MCF 10A (cell line): ENCODE measurements at regions of chr13 and their contacts with region 1.

Region 1: GRCh38 chr13:30132623-30133553 is 174.5 kb downstream of the KATNAL1 start:
- DNase-seq: peak; percentile 91
- H3K4me3 Mint-ChIP-seq: no peak overlapping the region
- H3K27ac Mint-ChIP-seq: peak overlapping the region; percentile 20
- H3K4me1 Mint-ChIP-seq: peaks cover 18% of the 10 kb centered on the region
- H3K27me3 Mint-ChIP-seq: no peaks in the 10 kb centered on the region
- CTCF ChIP-seq: peak; percentile 89

Region 2: GRCh38 chr13:30153545-30154441 is 20.9 kb after region 1 on chr13:
- CTCF ChIA-PET with region 1: interaction called, 97 read pairs
- POLR2A ChIA-PET with region 1: interaction called, 3 read pairs
- intact Hi-C with region 1: loop called (anchors 1 kb)
- DNase-seq: no peak
- H3K4me3 Mint-ChIP-seq: no peak overlapping the region
- H3K27ac Mint-ChIP-seq: no peak overlapping the region
- H3K4me1 Mint-ChIP-seq: peaks cover 4% of the 10 kb centered on the region
- H3K27me3 Mint-ChIP-seq: no peaks in the 10 kb centered on the region
- CTCF ChIP-seq: no peak

Region 3: GRCh38 chr13:30224732-30225131 is 91.8 kb after region 1 on chr13:
- CTCF ChIA-PET with region 1: interaction called, 11 read pairs
- POLR2A ChIA-PET with region 1: no interaction called
- intact Hi-C with region 1: no loop called
- DNase-seq: peak; percentile 67
- H3K4me3 Mint-ChIP-seq: no peak overlapping the region
- H3K27ac Mint-ChIP-seq: peak overlapping the region; percentile 74
- H3K4me1 Mint-ChIP-seq: peaks cover 12% of the 10 kb centered on the region
- H3K27me3 Mint-ChIP-seq: no peaks in the 10 kb centered on the region
- CTCF ChIP-seq: no peak

Region 4: DNA sequence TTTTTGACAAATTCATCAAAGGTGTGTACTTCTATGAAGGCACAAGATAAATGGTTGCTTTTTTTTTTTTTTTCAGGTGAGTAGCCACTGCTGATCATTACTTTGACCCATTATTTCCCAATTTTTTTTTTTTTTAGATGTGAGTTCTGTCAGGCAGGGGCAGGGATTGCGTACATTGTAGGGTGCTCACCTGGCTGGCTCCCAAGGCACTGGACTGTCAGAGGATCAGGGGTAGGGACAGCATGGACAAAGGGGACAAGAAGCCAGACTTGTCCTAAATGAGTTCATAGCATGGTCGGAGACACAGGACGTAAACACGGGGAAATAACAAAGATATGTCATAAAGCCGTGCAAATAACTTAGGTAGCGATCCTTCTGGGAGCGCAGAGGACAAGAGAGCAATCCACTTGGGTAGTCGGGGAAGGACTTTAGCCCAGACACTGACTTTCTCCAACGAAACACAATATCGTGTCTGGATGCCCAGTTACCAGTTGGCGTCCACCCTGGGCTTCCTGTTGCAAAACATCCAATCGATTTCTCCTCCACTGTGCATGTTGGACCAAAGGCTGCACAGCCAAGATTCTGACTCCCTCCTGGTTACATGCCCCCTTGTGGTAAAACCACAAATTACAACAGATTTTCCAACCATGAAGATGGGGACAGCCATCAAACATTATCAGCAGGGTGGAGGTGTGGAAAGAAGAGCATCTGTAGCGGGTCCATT is 201.9 kb after region 1 on chr13:
- CTCF ChIA-PET with region 1: interaction called, 4 read pairs
- POLR2A ChIA-PET with region 1: no interaction called
- intact Hi-C with region 1: loop called (anchors 2 kb)
- DNase-seq: peak; percentile 57
- H3K4me3 Mint-ChIP-seq: no peak overlapping the region
- H3K27ac Mint-ChIP-seq: no peak overlapping the region
- H3K4me1 Mint-ChIP-seq: peaks cover 22% of the 10 kb centered on the region
- H3K27me3 Mint-ChIP-seq: no peaks in the 10 kb centered on the region
- CTCF ChIP-seq: peak; percentile 32

Region 5: DNA sequence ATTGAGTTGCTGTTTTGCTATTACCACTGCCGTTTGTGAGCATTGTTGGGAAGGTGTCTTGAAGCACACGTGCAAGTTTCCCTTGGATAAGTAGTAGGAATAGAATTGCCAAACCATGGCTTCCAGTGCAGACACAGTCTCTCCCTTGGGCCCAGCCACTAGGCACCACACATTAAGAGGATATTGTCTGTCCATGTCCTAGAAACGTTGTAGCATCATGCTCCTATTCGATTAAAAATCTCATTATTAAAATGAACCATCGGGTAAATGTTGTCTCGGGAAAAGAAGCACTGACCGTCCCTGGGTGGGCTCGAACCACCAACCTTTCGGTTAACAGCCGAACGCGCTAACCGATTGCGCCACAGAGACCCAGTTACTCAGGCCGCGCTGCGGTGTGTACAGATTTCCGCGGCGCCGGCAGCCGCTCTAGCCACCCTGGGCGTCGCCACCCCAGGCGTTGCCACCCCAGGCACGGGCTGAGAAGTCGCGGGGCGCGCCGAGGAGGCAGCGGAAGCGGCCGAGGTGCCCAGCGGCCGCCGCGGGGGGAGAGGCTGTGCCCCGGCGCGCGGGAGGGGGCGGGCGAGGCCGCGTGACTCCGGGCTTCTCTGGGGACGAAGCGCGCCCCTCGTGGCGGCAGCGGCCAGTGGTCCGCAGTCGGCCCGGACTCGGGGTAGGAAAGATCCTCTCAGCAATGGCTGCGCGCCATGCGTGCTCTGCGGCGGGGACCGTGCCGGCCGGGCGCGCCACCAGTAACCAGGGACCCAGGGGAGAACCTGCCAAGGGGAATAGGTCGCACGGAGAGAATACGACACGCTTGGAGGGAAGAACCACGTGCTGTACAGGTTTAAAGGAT is 541.0 kb after region 1 on chr13:
- CTCF ChIA-PET with region 1: no interaction called
- POLR2A ChIA-PET with region 1: no interaction called
- intact Hi-C with region 1: loop called (anchors 5 kb)
- DNase-seq: peak; percentile 83
- H3K4me3 Mint-ChIP-seq: peak overlapping the region; percentile 75
- H3K27ac Mint-ChIP-seq: peak overlapping the region; percentile 16
- H3K4me1 Mint-ChIP-seq: no peaks in the 10 kb centered on the region
- H3K27me3 Mint-ChIP-seq: no peaks in the 10 kb centered on the region
- CTCF ChIP-seq: peak; percentile 54

Region 6: DNA sequence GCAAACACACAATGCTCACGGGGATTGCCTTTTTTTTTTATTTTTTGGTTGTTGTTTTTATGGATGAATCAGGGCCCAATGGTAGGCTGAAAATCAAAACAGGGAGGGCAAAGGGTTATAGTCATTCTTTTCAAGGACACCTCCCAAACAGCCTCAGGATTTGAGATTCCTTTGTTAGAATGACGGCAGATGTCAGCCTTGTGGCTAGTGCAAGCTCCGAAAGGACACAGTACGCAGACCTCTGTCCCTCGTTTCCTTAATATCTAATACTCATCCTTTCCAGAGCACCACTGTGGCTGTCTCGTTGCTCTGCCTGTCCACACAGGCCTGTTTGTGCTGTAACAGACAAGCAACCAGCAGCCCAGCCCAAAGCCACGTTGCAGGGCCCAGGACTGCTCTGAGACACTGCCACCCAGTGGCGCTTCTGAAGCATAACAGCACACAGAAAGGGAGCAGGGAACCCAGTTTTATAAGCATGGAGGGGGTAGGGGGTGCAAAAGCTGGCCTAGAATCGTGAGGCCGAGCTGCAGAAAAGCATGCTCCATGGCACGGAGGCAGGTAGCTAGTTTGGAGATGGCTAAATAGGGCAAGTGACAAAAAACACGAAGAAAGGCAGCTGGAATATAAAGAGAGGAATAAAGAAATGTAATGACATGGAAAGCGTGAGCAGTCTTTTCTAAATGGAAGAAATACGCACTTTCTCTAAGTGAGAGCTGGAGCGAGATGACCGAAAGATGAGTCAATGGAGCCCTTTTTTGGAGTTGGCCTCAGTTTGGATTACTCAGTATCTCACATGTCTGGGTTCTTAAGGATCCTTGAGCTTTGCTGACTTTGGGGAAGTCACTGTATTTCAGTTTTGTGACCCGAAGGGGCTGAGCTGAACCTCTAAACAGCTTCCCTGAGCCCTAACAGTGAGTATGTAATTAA is 732.5 kb after region 1 on chr13:
- CTCF ChIA-PET with region 1: interaction called, 3 read pairs
- POLR2A ChIA-PET with region 1: no interaction called
- intact Hi-C with region 1: loop called (anchors 10 kb)
- DNase-seq: peak; percentile 89
- H3K4me3 Mint-ChIP-seq: peak overlapping the region; percentile 38
- H3K27ac Mint-ChIP-seq: peak overlapping the region; percentile 85
- H3K4me1 Mint-ChIP-seq: peaks cover 38% of the 10 kb centered on the region
- H3K27me3 Mint-ChIP-seq: no peaks in the 10 kb centered on the region
- CTCF ChIP-seq: peak; percentile 93